Left colon (tissue), 2 donors: ENCODE measurements at regions of chr19 and their contacts with region 1.

Region 1: DNA sequence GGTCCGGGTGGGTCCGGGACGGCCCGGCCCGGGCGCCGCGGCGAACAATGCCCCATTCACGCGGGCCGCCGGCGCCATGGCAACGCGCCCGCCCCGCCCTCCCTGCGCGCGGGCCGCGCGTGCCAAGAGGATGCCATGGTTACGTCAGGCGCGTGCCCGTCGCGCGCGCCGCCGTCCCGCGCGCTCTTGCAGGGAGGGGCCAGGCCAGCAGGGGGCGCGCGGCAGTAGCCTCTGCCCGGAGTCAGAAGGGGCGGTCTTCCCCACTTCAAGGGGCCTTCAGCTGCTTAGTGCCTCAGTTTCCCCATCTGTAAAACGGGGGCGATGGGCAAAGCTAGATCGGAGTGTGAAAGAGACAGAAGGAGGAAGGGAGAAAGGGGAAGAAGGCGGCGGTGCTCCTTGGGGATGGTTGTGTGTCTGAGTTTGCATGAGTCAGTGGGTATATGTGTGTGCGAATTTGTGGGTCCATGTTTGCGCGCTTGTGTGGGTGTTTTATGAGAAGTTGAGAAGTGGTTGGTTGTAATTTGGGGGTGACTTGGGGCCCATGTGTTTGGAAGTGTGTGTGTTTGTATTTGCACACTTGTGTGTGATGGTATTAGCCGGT is 11.6 kb upstream of the NFIX start:
- DNase-seq: peak in 1 of 2 donors; percentile 86
- ATAC-seq: peak; percentile 66

Region 2: DNA sequence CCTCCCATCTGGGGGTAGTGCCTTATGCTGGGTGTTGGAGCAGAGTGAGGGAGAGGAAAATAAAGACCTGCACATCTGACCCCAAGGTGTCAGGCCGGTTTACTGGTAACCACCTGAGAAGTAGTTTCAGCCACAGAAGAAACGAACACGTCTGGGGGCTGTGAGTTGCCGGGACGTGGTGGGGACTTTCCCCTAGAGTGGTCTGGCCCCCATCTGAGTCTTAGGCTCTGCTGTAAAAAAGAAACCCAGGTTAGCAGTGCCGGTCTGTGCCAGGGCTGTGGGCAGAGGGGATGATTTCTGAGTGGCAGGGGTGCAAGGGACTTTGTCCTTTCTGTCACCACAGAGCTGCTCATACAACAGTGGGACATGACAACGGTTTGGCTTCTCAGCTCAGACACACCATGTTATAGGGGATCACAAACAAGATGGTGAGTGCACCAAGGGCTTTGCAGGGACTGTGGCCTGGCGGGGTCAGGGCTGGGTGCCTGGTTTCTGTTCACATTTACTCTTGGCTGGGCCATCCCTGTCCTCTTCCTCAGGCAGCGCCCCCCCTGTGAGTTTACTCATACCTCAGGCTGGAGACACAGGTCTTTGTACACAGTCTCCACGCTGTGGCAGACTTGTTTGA is 83.6 kb before region 1 on chr19:
- intact Hi-C with region 1: no loop called
- DNase-seq: no peak
- ATAC-seq: no peak

Region 3: GRCh38 chr19:12930002-12930653 is 53.5 kb before region 1 on chr19:
- intact Hi-C with region 1: no loop called
- DNase-seq: no peak
- ATAC-seq: no peak

Region 4: DNA sequence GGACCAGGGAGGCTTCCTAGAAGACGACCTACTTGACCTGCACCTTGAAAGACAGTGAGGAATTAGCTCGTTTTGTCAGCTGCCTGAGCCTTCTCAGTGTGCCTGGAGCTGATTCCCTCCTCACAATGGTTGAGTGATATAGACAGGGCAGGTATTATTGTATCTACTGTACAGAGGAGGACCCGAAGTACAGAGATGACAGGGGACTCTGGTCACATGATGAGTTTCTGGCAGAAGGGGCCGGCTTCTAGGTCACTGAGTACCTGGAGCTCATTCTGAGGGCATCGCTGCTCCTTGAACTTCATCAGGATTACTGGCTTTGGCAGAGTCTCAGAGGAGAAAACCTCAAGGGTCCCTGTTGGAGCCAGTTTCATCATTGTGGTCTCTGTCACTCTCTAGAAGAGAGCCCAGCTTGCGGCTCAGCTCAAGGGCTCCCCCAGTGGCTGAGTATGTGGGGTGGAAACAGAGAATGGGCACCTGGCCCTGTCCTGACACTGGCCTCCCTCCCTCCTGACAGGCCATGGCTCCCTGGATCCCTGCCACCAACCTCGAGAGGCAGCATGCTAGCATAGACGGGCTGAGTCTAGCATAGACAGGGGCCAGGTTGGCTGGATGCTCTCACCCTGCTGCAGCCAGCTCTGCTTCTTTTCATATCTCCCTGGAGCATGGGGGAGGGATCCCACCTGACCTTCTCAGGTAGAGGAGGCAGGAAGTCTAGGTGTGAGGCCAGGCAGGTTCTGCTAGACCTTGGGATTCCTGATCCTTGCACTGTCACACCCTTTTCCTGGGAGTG is 50.4 kb after region 1 on chr19:
- intact Hi-C with region 1: loop called in 1 of 2 experiments (anchors 10 kb)
- DNase-seq: peak; percentile 84 to 91
- ATAC-seq: peak; percentile 83

Region 5: DNA sequence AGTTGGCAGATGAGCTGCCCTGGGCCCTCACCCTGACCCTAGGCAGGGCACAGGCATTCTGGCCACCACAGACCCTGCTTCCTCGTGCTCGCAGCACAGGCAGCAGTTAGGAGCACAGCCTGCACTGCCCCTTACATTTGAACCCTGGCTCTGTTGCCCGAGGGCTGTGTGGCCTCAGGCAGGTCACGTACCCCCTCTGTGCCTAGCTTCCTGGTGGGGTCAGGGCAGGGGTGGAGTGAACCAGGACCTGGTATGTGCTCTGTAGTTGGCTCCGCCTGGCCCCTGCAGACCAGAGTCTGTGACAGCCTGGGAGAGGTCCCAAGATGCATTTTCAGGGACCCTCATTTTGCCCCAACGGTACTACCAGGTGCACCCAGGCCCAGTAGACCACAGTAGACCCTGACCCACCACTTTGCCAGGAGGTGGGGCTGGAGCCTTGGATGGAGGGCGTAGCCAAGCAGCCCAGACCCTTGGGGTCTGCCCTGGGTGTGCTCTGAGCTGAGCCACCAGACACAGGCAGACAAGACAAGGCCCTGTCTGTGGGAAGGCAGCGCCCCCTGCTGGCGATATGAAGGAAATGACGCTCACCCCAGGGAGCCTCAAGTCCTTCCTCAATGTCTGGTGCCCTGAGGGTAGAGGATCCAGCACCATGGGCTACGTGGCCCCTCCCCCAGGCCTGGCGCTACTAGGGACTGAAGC is 109.9 kb after region 1 on chr19:
- intact Hi-C with region 1: loop called (anchors 5 to 10 kb)
- DNase-seq: peak; percentile 75 to 82
- ATAC-seq: peak; percentile 74

Region 6: DNA sequence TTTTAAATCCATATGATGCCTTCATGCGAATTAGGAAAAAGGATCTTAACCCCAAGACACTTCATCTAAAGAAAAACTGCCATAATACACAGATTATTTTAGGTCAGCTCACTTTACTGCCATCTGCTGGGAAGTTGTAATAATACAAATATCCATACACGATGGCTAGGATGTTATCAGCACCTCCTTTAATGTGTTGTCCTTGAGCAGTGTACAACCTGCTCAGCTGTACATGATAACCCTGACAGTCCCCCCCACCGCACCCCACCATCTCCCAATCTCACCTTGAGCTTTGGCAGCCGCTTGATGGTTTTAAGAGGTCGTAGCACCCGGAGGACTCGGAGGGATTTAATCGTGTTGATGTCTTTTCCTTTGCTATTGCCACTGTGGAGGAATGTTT is 278.8 kb after region 1 on chr19:
- intact Hi-C with region 1: loop called in 1 of 2 experiments (anchors 10 kb)
- DNase-seq: no peak
- ATAC-seq: peak; percentile 80